Naive thymus-derived CD4-positive, alpha-beta T cell (primary cell): ENCODE measurements at regions of chr1 and their contacts with region 1.

Region 1: DNA sequence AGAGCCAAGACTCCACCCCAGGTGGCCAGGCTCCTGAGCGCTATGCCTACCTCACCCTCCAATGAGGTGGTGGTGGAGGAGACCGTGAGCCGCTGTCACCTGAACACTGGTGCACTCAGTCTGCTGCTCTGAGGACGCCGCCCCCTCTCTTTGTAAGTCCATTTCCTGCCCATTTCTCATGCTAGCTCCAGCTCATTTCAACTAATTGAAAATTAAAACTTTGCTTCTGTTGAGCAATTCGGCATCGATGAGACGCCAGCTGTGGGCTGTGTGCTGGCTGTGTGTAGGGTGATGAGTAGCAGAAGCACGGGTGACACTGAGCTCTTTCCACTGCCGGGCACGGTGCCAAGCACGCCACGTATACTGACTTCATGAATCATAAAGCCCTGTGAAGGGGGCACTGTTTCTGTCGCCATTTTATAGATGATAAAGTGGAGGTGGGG is 11.2 kb downstream of the TNFRSF1B start:
- DNase-seq: peak; percentile 75 to 96 (median 85)
- ATAC-seq: peak; percentile 74
- H3K4me3 ChIP-seq: peak overlapping the region; percentile 38
- H3K4me3 Mint-ChIP-seq: peak overlapping the region; percentile 81 to 92 (median 86)
- H3K27ac ChIP-seq: peak overlapping the region; percentile 82
- H3K27ac Mint-ChIP-seq: peak overlapping the region; percentile 89 to 100 (median 97)
- H3K4me1 ChIP-seq: peaks cover 66 to 80% of the 10 kb centered on the region in 2 donors
- H3K4me1 Mint-ChIP-seq: peaks cover 51 to 91% (median 80%) of the 10 kb centered on the region in 7 donors
- H3K27me3 ChIP-seq: no peaks in the 10 kb centered on the region
- H3K27me3 Mint-ChIP-seq: no peaks in the 10 kb centered on the region

Region 2: DNA sequence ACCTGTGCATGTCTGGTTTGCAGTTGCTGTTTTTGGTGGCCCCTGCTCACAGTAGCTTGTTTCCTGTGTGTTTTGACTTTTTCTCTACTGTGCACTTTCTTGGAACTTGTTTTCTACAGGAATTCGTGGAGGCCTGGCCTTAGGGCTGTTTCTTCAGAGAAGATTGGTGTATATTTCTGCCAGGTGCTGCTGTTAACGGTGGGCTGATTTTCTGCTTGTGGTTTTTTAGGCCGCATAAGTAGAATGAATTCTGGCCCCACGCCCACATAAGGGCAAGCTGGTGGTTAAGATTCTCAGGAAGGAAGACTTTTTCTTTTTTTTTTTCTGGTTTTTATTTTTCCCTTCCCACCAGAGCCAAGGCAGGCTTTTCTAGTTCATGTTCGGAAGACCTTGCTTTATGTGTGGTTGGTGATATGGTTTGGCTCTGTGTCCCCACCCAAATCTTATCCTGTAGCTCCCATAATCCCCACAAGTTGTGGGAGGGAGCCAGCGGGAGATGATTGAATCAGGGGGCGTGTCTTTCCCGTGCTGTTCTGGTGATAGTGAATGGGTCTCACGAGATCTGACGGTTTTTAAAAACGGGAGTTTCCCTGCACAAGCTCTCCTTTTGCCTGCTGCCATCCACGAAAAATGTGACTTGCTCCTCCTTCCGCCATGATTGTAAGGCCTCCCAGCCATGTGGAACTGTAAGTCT is 770.6 kb before region 1 on chr1:
- CTCF ChIA-PET with region 1: no interaction called
- POLR2A ChIA-PET with region 1: no interaction called
- intact Hi-C with region 1: no loop called
- DNase-seq: peak in 4 of 9 donors; percentile 4 to 34 (median 20)
- ATAC-seq: no peak
- H3K4me3 ChIP-seq: no peak overlapping the region
- H3K4me3 Mint-ChIP-seq: peak overlapping the region; percentile 50 to 85 (median 72)
- H3K27ac ChIP-seq: peak overlapping the region; percentile 14
- H3K27ac Mint-ChIP-seq: peak overlapping the region; percentile 51 to 90 (median 69)
- H3K4me1 ChIP-seq: peaks cover 0 to 40% of the 10 kb centered on the region in 2 donors
- H3K4me1 Mint-ChIP-seq: peaks cover 29 to 63% (median 59%) of the 10 kb centered on the region in 7 donors
- H3K27me3 ChIP-seq: no peaks in the 10 kb centered on the region
- H3K27me3 Mint-ChIP-seq: peaks cover 0 to 2% (median 0%) of the 10 kb centered on the region in 5 donors

Region 3: DNA sequence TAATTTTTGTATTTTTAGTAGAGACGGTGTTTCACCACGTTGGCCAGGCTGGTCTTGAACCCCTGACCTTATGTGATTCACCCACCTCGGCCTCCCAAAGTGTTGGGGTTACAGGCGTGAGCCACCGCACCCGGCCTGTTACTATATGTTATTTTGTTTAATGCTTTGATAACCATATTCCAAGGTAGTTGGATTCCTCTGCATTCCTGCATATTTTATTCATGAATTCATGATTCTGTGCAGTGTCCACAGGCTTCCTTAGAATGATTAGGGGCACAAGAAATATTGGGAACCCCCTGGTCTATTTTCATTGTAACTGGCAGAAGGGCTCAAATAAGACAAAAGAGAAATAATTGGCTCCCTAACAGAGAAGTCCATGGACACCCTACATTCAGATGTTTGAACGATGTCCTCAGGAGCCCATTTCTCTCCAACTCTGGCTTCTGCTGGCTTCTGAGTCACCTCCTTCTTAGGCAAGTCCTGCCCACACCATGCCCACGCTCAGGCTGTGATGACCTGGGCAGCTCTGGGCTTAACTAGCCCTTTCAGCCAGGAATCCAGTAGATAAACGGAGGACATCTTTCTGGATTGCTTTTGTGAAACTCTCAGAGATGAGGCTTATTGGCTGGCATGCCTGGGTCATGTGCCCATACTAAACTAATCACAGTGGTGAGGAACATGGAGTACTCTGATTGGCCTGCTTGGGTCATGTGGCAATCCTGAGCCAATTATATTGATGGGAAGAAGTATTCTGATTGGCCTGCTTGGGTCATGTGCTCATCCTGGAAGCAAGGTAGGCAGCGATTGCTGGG is 82.4 kb before region 1 on chr1:
- CTCF ChIA-PET with region 1: no interaction called
- POLR2A ChIA-PET with region 1: no interaction called
- intact Hi-C with region 1: no loop called
- DNase-seq: no peak
- ATAC-seq: no peak
- H3K4me3 ChIP-seq: no peak overlapping the region
- H3K4me3 Mint-ChIP-seq: no peak overlapping the region
- H3K27ac ChIP-seq: no peak overlapping the region
- H3K27ac Mint-ChIP-seq: peak overlapping the region in 1 of 9 donors; percentile 55
- H3K4me1 ChIP-seq: peaks cover 0 to under 1% of the 10 kb centered on the region in 2 donors
- H3K4me1 Mint-ChIP-seq: peaks cover 3 to 14% (median 10%) of the 10 kb centered on the region in 7 donors
- H3K27me3 ChIP-seq: no peaks in the 10 kb centered on the region
- H3K27me3 Mint-ChIP-seq: no peaks in the 10 kb centered on the region

Region 4: GRCh38 chr1:12132092-12132491 is 45.9 kb before region 1 on chr1:
- CTCF ChIA-PET with region 1: interaction called, 36 read pairs
- POLR2A ChIA-PET with region 1: interaction called, 7 read pairs
- intact Hi-C with region 1: loop called in 1 of 2 experiments (anchors 1 kb)
- DNase-seq: no peak
- ATAC-seq: no peak
- H3K4me3 ChIP-seq: no peak overlapping the region
- H3K4me3 Mint-ChIP-seq: peak overlapping the region in 8 of 10 donors; percentile 17 to 88 (median 41)
- H3K27ac ChIP-seq: peak overlapping the region; percentile 61
- H3K27ac Mint-ChIP-seq: peak overlapping the region; percentile 91 to 97 (median 94)
- H3K4me1 ChIP-seq: peaks cover 20 to 33% of the 10 kb centered on the region in 2 donors
- H3K4me1 Mint-ChIP-seq: peaks cover 15 to 42% (median 36%) of the 10 kb centered on the region in 7 donors
- H3K27me3 ChIP-seq: no peaks in the 10 kb centered on the region
- H3K27me3 Mint-ChIP-seq: no peaks in the 10 kb centered on the region

Region 5: GRCh38 chr1:12161662-12162458 is 16.2 kb before region 1 on chr1:
- CTCF ChIA-PET with region 1: no interaction called
- POLR2A ChIA-PET with region 1: interaction called, 29 read pairs
- intact Hi-C with region 1: loop called (anchors 1 kb)
- DNase-seq: peak in 2 of 9 donors; percentile 36 to 74
- ATAC-seq: peak; percentile 87
- H3K4me3 ChIP-seq: peak overlapping the region; percentile 38
- H3K4me3 Mint-ChIP-seq: peak overlapping the region in 7 of 10 donors; percentile 37 to 82 (median 53)
- H3K27ac ChIP-seq: peak overlapping the region; percentile 20
- H3K27ac Mint-ChIP-seq: peak overlapping the region in 6 of 9 donors; percentile 4 to 96 (median 72)
- H3K4me1 ChIP-seq: peaks cover 49 to 74% of the 10 kb centered on the region in 2 donors
- H3K4me1 Mint-ChIP-seq: peaks cover 60 to 87% (median 65%) of the 10 kb centered on the region in 7 donors
- H3K27me3 ChIP-seq: no peaks in the 10 kb centered on the region
- H3K27me3 Mint-ChIP-seq: no peaks in the 10 kb centered on the region

Region 6: GRCh38 chr1:12166834-12167492 is 11.1 kb before region 1 on chr1 and contains the start of gene TNFRSF1B:
- CTCF ChIA-PET with region 1: no interaction called
- POLR2A ChIA-PET with region 1: interaction called, 29 read pairs
- intact Hi-C with region 1: loop called (anchors 1 kb)
- DNase-seq: peak; percentile 42 to 84 (median 51)
- ATAC-seq: peak; percentile 82
- H3K4me3 ChIP-seq: peak within 1 kb of the TSS; percentile 84
- H3K4me3 Mint-ChIP-seq: peak within 1 kb of the TSS; percentile 94 to 100 (median 98)
- H3K27ac ChIP-seq: peak within 1 kb of the TSS; percentile 91
- H3K27ac Mint-ChIP-seq: peak within 1 kb of the TSS; percentile 94 to 100 (median 98)
- H3K4me1 ChIP-seq: peaks cover 19 to 59% of the 10 kb centered on the region in 2 donors
- H3K4me1 Mint-ChIP-seq: peaks cover 42 to 83% (median 60%) of the 10 kb centered on the region in 7 donors
- H3K27me3 ChIP-seq: no peaks in the 10 kb centered on the region
- H3K27me3 Mint-ChIP-seq: no peaks in the 10 kb centered on the region
- total RNA-seq, gene TNFRSF1B: 38.6 to 278 (median 60.3) TPM

Region 7: DNA sequence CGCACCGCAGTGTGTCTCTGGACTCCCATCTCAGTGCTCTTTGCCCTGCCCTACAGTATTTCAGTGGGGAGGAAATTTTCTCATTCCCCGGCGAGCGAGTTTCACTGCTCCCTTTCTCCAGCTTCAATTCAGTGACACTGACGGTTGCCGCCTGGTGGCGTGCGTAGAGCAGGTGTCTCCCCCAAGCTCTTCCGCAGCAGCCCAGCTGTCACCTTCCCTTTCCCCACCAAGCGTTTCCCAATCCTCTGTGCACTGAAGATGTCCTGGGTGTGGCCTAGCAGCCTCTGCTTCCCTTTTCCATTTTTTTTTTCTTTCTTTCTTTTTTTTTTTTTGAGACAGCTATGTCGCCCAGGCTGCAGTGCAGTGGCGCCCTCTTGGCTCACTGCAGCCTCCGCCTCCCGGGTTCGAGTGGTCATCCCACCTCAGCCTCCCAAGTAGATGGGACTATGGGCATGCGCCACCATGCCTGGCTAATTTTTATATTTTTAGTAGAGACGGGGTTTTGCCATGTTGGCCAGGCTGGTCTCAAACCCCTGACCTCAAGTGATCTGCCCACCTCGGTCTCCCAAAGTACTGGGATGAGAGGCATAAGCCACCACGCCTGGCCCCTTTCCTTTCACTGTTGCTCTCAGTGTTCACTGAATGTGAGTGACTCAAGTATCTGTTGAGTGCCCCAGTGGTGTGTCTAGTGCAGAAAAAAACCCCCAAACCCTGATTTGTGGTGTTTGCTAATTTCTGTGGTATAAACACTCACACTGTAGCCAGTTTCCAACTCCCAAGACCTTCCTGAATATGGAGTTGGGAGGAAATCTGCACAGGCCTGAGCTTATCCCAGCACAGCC is 18.8 kb after region 1 on chr1:
- CTCF ChIA-PET with region 1: interaction called, 4 read pairs
- POLR2A ChIA-PET with region 1: interaction called, 3 read pairs
- intact Hi-C with region 1: loop called in 1 of 2 experiments (anchors 2 kb)
- DNase-seq: peak in 1 of 9 donors; percentile 29
- ATAC-seq: peak; percentile 77
- H3K4me3 ChIP-seq: no peak overlapping the region
- H3K4me3 Mint-ChIP-seq: no peak overlapping the region
- H3K27ac ChIP-seq: no peak overlapping the region
- H3K27ac Mint-ChIP-seq: peak overlapping the region in 2 of 9 donors; percentile 17 to 26
- H3K4me1 ChIP-seq: peaks cover 0 to 9% of the 10 kb centered on the region in 2 donors
- H3K4me1 Mint-ChIP-seq: peaks cover 0 to 39% (median 0%) of the 10 kb centered on the region in 7 donors
- H3K27me3 ChIP-seq: no peaks in the 10 kb centered on the region
- H3K27me3 Mint-ChIP-seq: no peaks in the 10 kb centered on the region

Region 8: GRCh38 chr1:12208764-12209494 is 30.9 kb after region 1 on chr1:
- CTCF ChIA-PET with region 1: interaction called, 7 read pairs
- POLR2A ChIA-PET with region 1: interaction called, 15 read pairs
- intact Hi-C with region 1: loop called (anchors 2 kb)
- DNase-seq: peak; percentile 64 to 92 (median 79)
- ATAC-seq: peak; percentile 89
- H3K4me3 ChIP-seq: no peak overlapping the region
- H3K4me3 Mint-ChIP-seq: peak overlapping the region in 6 of 10 donors; percentile 23 to 47 (median 34)
- H3K27ac ChIP-seq: peak overlapping the region; percentile 25
- H3K27ac Mint-ChIP-seq: peak overlapping the region; percentile 18 to 90 (median 76)
- H3K4me1 ChIP-seq: peaks cover 32 to 39% of the 10 kb centered on the region in 2 donors
- H3K4me1 Mint-ChIP-seq: peaks cover 32 to 56% (median 51%) of the 10 kb centered on the region in 7 donors
- H3K27me3 ChIP-seq: no peaks in the 10 kb centered on the region
- H3K27me3 Mint-ChIP-seq: no peaks in the 10 kb centered on the region